ENCODE measurements at regions of chr2 and their contacts with region 1.

Region 1: GRCh38 chr2:46461011-46461674 is 18.2 kb upstream of the TMEM247 start:
- DNase-seq: peak; percentile 46 to 87 (median 75)
- ATAC-seq: peak; percentile 71
- H3K4me3 ChIP-seq: no peak overlapping the region
- H3K4me3 Mint-ChIP-seq: no peak overlapping the region
- H3K27ac ChIP-seq: no peak overlapping the region
- H3K27ac Mint-ChIP-seq: no peak overlapping the region
- H3K4me1 ChIP-seq: no peaks in the 10 kb centered on the region
- H3K4me1 Mint-ChIP-seq: peaks cover 15% of the 10 kb centered on the region
- H3K27me3 ChIP-seq: no peaks in the 10 kb centered on the region
- H3K27me3 Mint-ChIP-seq: no peaks in the 10 kb centered on the region
- CTCF ChIP-seq: peak; percentile 99

Region 2: GRCh38 chr2:45643543-45644542 is 817.3 kb before region 1 on chr2:
- CTCF ChIA-PET with region 1: no interaction called
- POLR2A ChIA-PET with region 1: no interaction called
- intact Hi-C with region 1: loop called in 1 of 2 experiments (anchors 1 kb)
- DNase-seq: peak; percentile 56 to 88 (median 73)
- ATAC-seq: peak; percentile 97
- H3K4me3 ChIP-seq: peak overlapping the region; percentile 22 to 41
- H3K4me3 Mint-ChIP-seq: peak overlapping the region; percentile 49
- H3K27ac ChIP-seq: no peak overlapping the region
- H3K27ac Mint-ChIP-seq: no peak overlapping the region
- H3K4me1 ChIP-seq: peaks cover 9% of the 10 kb centered on the region
- H3K4me1 Mint-ChIP-seq: peaks cover 6% of the 10 kb centered on the region
- H3K27me3 ChIP-seq: peaks cover 0 to 13% of the 10 kb centered on the region in 2 experiments
- H3K27me3 Mint-ChIP-seq: peaks cover 18% of the 10 kb centered on the region
- CTCF ChIP-seq: peak; percentile 81

Region 3: DNA sequence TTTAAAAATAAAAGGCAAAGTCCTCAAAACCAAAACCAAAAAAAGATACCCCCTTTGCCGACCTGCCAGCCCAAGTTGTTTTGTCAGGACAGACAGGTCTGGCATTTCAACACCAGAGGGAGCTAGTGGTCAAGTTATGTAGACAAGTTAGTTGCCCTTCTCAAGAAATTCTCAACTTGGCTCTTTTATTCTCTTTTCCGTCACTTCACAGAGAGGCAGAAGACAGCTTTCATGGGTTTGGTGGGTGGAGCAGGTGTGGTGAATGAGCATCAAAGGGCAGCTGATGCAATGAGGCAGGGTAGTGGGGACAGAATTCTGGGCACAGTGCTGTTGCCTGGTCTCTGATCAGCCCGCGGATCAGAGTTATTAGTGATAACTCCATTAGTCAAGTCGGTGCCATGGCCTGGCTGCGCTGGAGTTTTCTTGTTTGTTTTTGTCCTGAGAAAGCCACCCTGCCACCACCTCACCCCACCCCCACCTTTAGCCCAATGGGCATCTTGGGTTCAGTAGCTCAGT is 467.6 kb before region 1 on chr2:
- CTCF ChIA-PET with region 1: interaction called, 28 read pairs
- POLR2A ChIA-PET with region 1: no interaction called
- intact Hi-C with region 1: loop called (anchors 1 kb)
- DNase-seq: peak; percentile 12 to 79 (median 58)
- ATAC-seq: peak; percentile 75
- H3K4me3 ChIP-seq: no peak overlapping the region
- H3K4me3 Mint-ChIP-seq: no peak overlapping the region
- H3K27ac ChIP-seq: no peak overlapping the region
- H3K27ac Mint-ChIP-seq: no peak overlapping the region
- H3K4me1 ChIP-seq: peaks cover 4% of the 10 kb centered on the region
- H3K4me1 Mint-ChIP-seq: peaks cover 5% of the 10 kb centered on the region
- H3K27me3 ChIP-seq: no peaks in the 10 kb centered on the region
- H3K27me3 Mint-ChIP-seq: no peaks in the 10 kb centered on the region
- CTCF ChIP-seq: peak; percentile 65

Region 4: GRCh38 chr2:46010925-46011490 is 450.1 kb before region 1 on chr2:
- CTCF ChIA-PET with region 1: interaction called, 12 read pairs
- POLR2A ChIA-PET with region 1: no interaction called
- intact Hi-C with region 1: loop called (anchors 1 kb)
- DNase-seq: peak in 2 of 9 experiments; percentile 28 to 50
- ATAC-seq: no peak
- H3K4me3 ChIP-seq: no peak overlapping the region
- H3K4me3 Mint-ChIP-seq: no peak overlapping the region
- H3K27ac ChIP-seq: no peak overlapping the region
- H3K27ac Mint-ChIP-seq: no peak overlapping the region
- H3K4me1 ChIP-seq: no peaks in the 10 kb centered on the region
- H3K4me1 Mint-ChIP-seq: no peaks in the 10 kb centered on the region
- H3K27me3 ChIP-seq: no peaks in the 10 kb centered on the region
- H3K27me3 Mint-ChIP-seq: no peaks in the 10 kb centered on the region
- CTCF ChIP-seq: peak; percentile 42

Region 5: DNA sequence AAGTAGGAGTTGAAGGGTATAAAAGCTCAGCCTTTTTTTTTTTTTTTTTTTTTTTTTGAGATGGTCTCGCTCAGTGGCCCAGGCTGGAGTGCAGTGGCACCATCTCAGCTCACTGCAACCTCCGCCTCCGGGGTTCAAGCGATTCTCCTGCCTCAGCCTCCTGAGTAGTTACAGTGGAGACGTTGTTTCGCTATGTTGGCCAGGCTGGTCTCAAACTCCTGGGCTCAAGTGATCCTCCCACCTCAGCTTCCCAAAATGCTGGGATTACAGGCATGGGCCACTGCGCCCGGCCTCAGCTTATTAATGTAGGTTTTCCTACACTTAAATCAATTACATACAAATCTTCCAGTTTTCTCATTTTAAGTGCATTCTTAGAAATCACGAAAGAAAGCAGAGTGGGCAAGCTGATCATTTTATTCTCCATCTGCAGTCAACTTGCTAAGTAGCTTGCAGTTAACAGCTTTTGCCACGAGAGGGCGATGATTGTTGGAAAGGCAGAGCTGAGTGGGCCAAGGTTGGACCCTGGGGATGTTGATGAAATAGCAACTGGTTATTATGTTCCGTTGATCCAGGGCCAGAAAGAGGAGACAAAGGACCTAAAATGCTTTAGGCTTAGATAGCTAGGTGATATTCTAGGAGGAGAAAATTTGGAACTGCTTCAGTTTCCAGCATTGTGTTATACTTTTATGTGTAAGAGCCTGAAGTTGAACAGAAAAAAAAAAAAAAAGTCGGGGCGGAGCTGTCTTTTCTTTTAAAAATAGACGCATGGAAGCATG is 398.3 kb before region 1 on chr2:
- CTCF ChIA-PET with region 1: interaction called, 28 read pairs
- POLR2A ChIA-PET with region 1: no interaction called
- intact Hi-C with region 1: loop called (anchors 1 kb)
- DNase-seq: peak; percentile 51 to 74 (median 70)
- ATAC-seq: peak; percentile 76
- H3K4me3 ChIP-seq: no peak overlapping the region
- H3K4me3 Mint-ChIP-seq: no peak overlapping the region
- H3K27ac ChIP-seq: no peak overlapping the region
- H3K27ac Mint-ChIP-seq: no peak overlapping the region
- H3K4me1 ChIP-seq: no peaks in the 10 kb centered on the region
- H3K4me1 Mint-ChIP-seq: peaks cover 3% of the 10 kb centered on the region
- H3K27me3 ChIP-seq: no peaks in the 10 kb centered on the region
- H3K27me3 Mint-ChIP-seq: peaks cover 3% of the 10 kb centered on the region
- CTCF ChIP-seq: peak; percentile 79

Region 6: GRCh38 chr2:46747297-46747818 is 286.2 kb after region 1 on chr2:
- CTCF ChIA-PET with region 1: no interaction called
- POLR2A ChIA-PET with region 1: no interaction called
- intact Hi-C with region 1: no loop called
- DNase-seq: peak in 1 of 9 experiments; percentile 4
- ATAC-seq: no peak
- H3K4me3 ChIP-seq: no peak overlapping the region
- H3K4me3 Mint-ChIP-seq: no peak overlapping the region
- H3K27ac ChIP-seq: no peak overlapping the region
- H3K27ac Mint-ChIP-seq: no peak overlapping the region
- H3K4me1 ChIP-seq: peaks cover 7% of the 10 kb centered on the region
- H3K4me1 Mint-ChIP-seq: peaks cover 61% of the 10 kb centered on the region
- H3K27me3 ChIP-seq: no peaks in the 10 kb centered on the region
- H3K27me3 Mint-ChIP-seq: no peaks in the 10 kb centered on the region
- CTCF ChIP-seq: no peak

Region 7: GRCh38 chr2:47323009-47323821 is 862.1 kb after region 1 on chr2:
- CTCF ChIA-PET with region 1: no interaction called
- POLR2A ChIA-PET with region 1: no interaction called
- intact Hi-C with region 1: loop called in 1 of 2 experiments (anchors 2 kb)
- DNase-seq: peak; percentile 37 to 77 (median 61)
- ATAC-seq: peak; percentile 98
- H3K4me3 ChIP-seq: no peak overlapping the region
- H3K4me3 Mint-ChIP-seq: no peak overlapping the region
- H3K27ac ChIP-seq: no peak overlapping the region
- H3K27ac Mint-ChIP-seq: no peak overlapping the region
- H3K4me1 ChIP-seq: no peaks in the 10 kb centered on the region
- H3K4me1 Mint-ChIP-seq: no peaks in the 10 kb centered on the region
- H3K27me3 ChIP-seq: peaks cover 0 to 5% of the 10 kb centered on the region in 2 experiments
- H3K27me3 Mint-ChIP-seq: peaks cover 9% of the 10 kb centered on the region
- CTCF ChIP-seq: peak; percentile 68